Activated T-helper 1 cell treated with anti-CD3 and anti-CD28 coated beads, Interleukin-12 subunit alpha, Interleukin-12 subunit beta, Interleukin-2, Interleukin-4 antibody, amounts not matched to agents 30 ng/mL and 10 ng/mL and 1 ng/mL, durations not matched to agents 14 hours and 24 hours and 36 hours (primary cell): ENCODE measurements at regions of chr6 and their contacts with region 1.

Region 1: DNA sequence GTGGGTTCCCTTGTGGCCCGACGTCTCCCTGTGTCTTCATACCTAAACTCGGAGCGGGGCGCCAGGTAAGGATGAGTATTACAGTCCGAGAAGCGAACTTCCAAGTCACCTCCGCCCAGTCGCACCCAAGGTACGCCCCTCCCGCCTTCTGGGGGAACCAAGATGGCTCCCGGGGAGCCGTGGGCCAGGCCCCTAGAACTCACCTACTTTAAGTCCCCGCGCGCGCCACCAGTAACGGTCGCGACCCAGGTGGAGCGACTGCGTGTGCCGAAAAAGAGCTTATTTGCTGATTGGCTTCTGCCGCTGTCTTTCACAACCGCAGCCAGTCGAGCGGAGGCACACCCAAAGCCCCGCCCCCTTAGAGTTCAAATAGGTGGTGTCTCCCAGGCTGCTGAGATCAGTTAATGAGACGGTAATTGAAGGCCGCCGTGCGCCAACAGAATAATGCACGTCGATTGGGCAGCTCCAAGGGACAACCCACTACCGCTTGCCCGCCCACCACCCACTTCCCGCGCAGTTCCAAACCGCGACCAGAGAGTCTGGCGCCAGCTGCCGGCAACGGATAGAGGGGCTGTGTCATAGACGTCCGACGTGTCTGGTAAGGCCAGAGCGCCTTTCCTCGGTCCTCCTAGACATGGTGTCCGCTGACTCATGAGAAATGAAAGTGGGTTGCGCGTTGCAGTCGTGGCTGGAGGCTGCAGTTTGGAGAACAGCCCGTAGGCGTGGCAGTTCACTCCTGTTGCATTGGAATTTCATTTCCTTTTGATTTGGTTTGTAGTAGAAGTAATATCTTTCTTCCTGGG is at the start of gene MDC1:
- DNase-seq: peak; percentile 99
- H3K4me3 Mint-ChIP-seq: peak within 1 kb of the TSS; percentile 91
- H3K27ac Mint-ChIP-seq: peak within 1 kb of the TSS; percentile 99
- H3K4me1 Mint-ChIP-seq: peaks cover 51% of the 10 kb centered on the region
- H3K27me3 Mint-ChIP-seq: no peaks in the 10 kb centered on the region
- total RNA-seq, gene MDC1: 93.7 and 95.7 TPM in 2 replicates

Region 2: GRCh38 chr6:30489081-30490025 is 227.9 kb before region 1 on chr6 and contains the start of gene HLA-E:
- intact Hi-C with region 1: loop called (anchors 1 kb)
- DNase-seq: peak; percentile 91
- H3K4me3 Mint-ChIP-seq: peak within 1 kb of the TSS; percentile 97
- H3K27ac Mint-ChIP-seq: peak within 1 kb of the TSS; percentile 99
- H3K4me1 Mint-ChIP-seq: peaks cover 64% of the 10 kb centered on the region
- H3K27me3 Mint-ChIP-seq: peaks cover 3% of the 10 kb centered on the region
- total RNA-seq, gene HLA-E: 476 and 483 TPM in 2 replicates

Region 3: GRCh38 chr6:30626484-30627366 is 90.5 kb before region 1 on chr6 and contains the start of gene ATAT1:
- intact Hi-C with region 1: loop called (anchors 1 kb)
- DNase-seq: peak; percentile 84
- H3K4me3 Mint-ChIP-seq: peak within 1 kb of the TSS; percentile 91
- H3K27ac Mint-ChIP-seq: peak within 1 kb of the TSS; percentile 95
- H3K4me1 Mint-ChIP-seq: peaks cover 27% of the 10 kb centered on the region
- H3K27me3 Mint-ChIP-seq: no peaks in the 10 kb centered on the region
- total RNA-seq, gene ATAT1: 11.6 and 13.4 TPM in 2 replicates

Region 4: DNA sequence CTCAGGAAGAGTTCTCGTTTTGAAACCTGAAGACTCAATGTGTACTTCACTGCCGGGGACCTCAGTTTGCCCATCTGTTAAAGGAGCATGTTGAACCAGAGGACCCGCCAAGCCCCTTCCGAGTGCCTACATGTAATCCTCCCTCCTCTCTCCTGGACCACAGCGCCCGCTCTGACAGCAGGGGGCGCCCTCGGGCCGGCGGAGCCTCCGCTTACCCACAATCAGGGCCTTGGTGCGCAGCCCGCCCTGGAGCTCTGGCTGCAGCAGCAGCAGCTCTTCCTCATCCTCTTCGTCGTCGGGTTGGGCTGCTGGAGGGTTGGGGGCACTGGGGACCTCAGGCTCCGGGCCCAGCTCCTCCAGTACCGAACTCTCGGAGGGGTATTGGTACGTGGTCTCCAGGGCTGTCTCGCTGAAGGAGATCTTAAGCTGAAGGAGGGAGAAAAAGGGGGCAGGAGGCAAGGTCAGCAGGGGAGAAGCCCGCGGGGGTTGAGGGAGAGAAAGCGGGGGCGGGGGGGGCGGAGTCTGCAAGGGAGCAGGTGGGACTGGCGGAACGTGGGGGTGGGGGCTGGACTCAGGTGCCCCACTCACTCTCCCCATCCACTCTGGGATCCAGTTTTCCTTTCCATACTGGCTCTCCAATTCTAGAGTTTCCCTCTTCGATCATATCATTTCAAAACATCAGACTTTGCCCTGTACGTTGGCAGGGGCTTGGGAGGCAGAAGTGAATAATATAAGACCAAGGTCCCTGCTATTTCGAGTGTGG is 38.1 kb before region 1 on chr6:
- intact Hi-C with region 1: loop called (anchors 1 kb)
- DNase-seq: peak; percentile 85
- H3K4me3 Mint-ChIP-seq: peak overlapping the region; percentile 94
- H3K27ac Mint-ChIP-seq: peak overlapping the region; percentile 90
- H3K4me1 Mint-ChIP-seq: peaks cover 26% of the 10 kb centered on the region
- H3K27me3 Mint-ChIP-seq: no peaks in the 10 kb centered on the region

Region 5: GRCh38 chr6:30742316-30743098 is 25.3 kb after region 1 on chr6 and contains the start of gene FLOT1:
- intact Hi-C with region 1: loop called (anchors 1 kb)
- DNase-seq: peak; percentile 92
- H3K4me3 Mint-ChIP-seq: peak within 1 kb of the TSS; percentile 100
- H3K27ac Mint-ChIP-seq: peak within 1 kb of the TSS; percentile 99
- H3K4me1 Mint-ChIP-seq: peaks cover 67% of the 10 kb centered on the region
- H3K27me3 Mint-ChIP-seq: peaks cover 4% of the 10 kb centered on the region
- total RNA-seq, gene FLOT1: 252 and 262 TPM in 2 replicates